Psoas muscle (tissue), 8 donors: ENCODE measurements at regions of chr5 and their contacts with region 1.

Region 1: GRCh38 chr5:173840111-173840983 is 47.8 kb upstream of the CPEB4 start:
- DNase-seq: no peak
- ATAC-seq: peak in 2 of 4 donors; percentile 37 to 44
- H3K4me3 ChIP-seq: no peak overlapping the region
- H3K27ac ChIP-seq: no peak overlapping the region
- H3K4me1 ChIP-seq: peaks cover 10% of the 10 kb centered on the region
- H3K27me3 ChIP-seq: no peaks in the 10 kb centered on the region
- CTCF ChIP-seq: no peak

Region 2: DNA sequence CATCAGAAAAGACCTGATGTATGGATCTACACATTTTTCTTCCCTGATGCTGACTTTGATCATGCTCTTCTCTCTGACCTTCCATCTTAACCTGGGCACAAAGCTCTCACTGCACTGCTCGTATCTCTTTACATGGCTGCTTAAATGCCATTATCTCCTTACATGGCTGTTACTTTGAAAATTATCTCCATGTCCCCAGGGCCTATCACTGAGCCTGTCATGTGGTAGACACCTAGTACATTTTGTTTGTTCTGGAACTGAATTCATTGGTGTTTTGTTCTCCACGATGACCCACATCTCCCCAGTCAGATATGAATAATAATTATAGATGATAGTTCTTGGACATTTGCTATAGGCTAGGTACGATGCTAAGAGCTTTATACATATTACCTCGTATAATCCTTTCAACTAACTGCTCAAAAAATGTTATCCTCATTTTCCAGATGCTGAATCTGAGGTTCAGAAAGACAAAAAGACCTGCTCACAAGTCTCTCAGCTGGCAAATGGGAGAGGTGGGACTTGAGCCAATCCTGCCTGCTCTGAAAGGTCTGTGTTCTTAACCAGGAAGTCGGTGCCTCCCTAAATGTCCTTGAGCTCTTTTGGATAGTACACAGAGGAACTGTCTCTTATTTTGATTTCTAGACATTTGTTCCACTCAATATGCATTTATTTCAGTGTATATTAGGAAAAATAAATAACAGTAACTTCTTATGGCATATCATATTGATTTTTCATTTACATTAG is 38.0 kb after region 1 on chr5:
- intact Hi-C with region 1: loop called in 1 of 2 experiments (anchors 5 kb)
- DNase-seq: no peak
- ATAC-seq: peak in 1 of 4 donors; percentile 42
- H3K4me3 ChIP-seq: no peak overlapping the region
- H3K27ac ChIP-seq: no peak overlapping the region
- H3K4me1 ChIP-seq: peaks cover 4% of the 10 kb centered on the region
- H3K27me3 ChIP-seq: no peaks in the 10 kb centered on the region
- CTCF ChIP-seq: no peak